Posterior vena cava (tissue), 2 donors: ENCODE measurements at regions of chrX and their contacts with region 1.

Region 1: DNA sequence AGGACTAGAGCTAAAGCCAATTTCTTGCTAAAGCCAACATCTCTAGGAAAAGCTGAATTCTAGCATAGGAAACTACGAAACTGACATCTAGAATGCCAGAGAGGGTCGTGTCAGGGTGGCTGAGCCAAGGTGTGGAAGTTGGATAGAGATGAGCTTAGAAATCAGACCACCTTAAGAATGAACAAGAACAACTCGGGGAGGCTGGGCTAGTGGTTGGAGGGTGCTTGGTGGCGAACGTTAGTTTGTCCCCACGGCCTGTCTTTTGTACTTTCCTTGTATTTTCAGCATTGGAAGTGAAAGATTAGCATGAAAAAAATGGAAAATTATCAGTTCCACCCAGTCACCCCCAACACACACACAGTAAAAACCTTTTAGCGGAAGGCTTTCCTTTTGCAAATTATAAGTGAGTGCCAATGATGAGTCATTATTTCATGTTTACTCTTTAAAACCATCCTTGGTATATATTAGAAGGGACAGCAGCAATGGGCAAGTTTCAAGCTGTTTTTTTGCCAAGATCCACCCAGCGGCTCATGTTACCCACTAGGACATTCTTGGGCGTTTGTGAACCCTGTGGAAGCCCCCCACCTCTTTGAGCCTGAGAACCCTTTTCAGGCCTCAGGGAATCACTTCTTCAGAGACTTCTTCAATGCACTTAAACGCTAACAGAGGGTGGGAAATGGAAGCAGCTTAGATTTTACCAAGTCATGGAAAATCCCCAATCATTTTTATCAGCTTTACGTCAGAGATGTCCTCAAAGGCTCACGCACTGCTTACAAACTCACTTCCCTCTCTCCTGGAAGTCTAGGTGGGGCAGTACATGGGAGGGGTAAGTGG is 4.9 kb upstream of the PPEF1 start:
- DNase-seq: no peak

Region 2: DNA sequence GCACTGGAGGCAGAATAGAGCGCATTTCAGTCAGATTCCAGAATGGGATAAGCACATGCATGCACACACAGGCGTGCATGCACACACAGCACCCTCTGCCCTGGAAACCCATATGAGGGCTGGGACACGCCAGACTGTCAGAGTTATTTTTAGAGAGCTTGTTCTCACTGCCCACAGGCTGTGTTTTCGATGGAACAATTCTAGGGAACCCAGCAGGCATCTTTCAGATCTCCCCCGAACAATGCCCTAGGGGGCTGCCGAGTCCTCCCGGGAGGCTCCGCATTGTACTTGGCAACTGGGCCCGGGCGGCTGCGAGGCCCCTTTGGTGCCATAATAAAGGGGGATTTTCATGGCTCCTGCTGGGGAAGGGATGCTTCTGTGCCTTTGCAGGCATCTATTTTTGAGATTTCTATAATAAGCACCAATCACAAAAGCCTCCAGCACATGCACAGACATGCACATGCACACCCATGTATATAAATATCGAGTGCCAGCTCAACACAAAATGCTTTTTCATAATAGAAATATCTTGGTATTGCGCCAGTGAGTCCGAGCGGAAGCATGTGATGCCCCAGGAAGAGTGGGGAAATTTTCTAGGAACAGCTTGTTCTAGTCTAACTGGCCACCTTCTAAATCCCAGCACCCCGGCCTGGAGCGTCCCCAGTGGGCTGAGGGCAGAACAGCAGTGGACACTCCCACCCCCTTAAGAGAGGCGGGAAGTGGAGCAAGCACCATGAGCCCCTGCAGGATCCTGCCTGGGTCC is 192.8 kb after region 1 on chrX:
- intact Hi-C with region 1: no loop called
- DNase-seq: no peak

Region 3: DNA sequence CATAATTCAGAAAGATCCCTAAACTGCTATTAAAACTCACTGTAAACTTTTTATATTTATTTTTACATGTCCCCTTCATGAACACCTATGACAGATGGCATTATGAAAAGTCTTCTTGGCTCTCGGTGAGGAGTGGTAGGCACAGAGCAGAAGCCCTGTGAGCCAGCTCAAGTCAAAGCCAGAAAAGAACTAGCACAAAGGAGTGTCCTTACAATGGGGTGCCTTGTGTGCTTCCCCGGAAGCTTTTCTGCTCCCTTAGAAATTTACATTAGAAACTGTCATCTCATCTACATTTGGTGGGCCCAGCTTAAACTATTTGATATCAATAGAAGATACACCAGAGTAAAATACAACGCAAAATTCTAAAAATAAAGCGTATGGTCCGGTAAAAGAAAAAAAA is 948.4 kb after region 1 on chrX:
- intact Hi-C with region 1: loop called in 1 of 2 experiments (anchors 5 kb)
- DNase-seq: no peak